AG04449 (cell line): ENCODE measurements at regions of chr21 and their contacts with region 1.

Region 1: DNA sequence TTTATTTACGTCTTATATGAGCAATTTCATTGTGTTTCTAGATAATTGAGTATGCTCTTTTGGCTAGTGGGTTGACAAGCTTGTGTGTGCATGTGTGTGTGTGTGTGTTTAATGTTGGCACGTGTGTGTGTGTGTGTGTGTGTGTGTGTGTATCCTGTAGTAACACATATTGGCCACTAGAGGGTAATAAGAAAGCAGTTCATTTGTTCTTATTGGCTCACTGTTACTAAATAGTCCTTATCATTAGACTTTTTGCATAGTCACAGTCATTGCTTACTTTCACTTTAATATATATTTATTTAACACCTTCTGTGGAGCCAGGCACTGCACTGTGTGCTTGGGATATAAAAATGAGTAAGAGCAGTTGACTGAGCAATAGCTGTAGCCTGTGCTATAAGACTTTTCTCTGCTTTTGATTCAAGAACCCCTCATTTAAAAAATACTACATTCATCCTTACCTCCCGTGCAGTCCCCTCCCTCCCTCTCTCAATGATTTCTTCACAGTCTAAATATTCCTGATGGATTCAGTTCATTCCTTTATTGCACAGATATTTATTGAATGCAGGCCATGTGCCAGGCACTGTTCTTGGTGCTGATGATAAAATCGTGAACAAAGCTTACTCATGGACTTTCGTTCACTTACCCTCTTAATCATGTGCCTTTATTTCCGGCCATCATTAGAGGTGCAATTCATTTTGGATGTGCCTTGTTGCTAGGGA is 96.7 kb downstream of the DYRK1A start:
- DNase-seq: no peak
- H3K4me3 ChIP-seq: no peak overlapping the region; the same call in 1 of the 2 replicates
- CTCF ChIP-seq: peak; percentile 50

Region 2: DNA sequence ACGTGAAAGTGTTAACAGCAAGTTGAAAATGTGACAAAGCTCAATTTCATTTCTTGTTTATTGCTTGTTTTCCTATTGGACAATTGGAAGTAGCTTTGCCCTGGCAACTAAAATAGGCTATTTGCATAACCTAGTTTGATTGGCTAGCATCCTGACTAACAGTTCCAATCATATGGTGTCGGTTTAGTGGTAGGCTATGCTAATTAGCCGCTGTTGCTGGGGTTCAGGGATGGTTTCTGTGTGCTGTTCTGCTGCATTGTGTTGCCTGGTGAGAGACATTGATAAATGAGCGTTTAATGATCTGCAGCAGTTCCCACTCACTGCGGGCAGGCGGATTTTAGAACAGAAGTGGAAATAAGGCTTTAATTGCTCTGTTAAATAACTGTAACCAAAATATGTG is 28.1 kb before region 1 on chr21:
- CTCF ChIA-PET with region 1: interaction called, 10 read pairs
- POLR2A ChIA-PET with region 1: no interaction called
- DNase-seq: peak; percentile 61
- H3K4me3 ChIP-seq: no peak overlapping the region
- CTCF ChIP-seq: no peak

Region 3: DNA sequence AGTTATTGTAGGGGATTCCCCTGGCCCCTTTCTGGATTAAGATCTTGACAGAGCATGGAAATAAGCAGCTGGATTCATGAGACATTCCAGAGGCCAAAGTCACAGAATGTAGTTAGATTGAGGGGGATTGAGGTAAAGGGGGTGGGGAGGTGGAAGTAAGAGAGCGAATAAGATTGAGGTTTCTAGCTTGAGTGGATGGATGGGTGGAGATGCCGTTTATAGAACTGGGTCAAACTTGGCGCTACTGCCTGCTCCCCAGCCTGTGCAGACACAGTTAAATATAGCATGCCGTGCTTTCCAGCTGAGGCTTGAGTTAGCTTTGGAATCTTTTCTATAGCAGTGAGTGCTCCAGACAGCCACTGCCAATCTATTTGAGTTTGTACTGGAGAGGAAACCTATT is 11.0 kb before region 1 on chr21:
- CTCF ChIA-PET with region 1: interaction called, 19 read pairs
- POLR2A ChIA-PET with region 1: no interaction called
- DNase-seq: peak; percentile 87
- H3K4me3 ChIP-seq: no peak overlapping the region
- CTCF ChIP-seq: no peak

Region 4: GRCh38 chr21:37475186-37475868 is 12.1 kb after region 1 on chr21:
- CTCF ChIA-PET with region 1: interaction called, 27 read pairs
- POLR2A ChIA-PET with region 1: no interaction called
- DNase-seq: no peak
- H3K4me3 ChIP-seq: no peak overlapping the region
- CTCF ChIP-seq: no peak